KBM-7 (cell line): ENCODE measurements at regions of chr18 and their contacts with region 1.

Region 1: GRCh38 chr18:11040823-11041656 is 108.3 kb downstream of the PIEZO2 start:
- DNase-seq: peak; percentile 32

Region 2: GRCh38 chr18:10558243-10558966 is 482.6 kb before region 1 on chr18:
- in situ Hi-C with region 1: no loop called
- DNase-seq: no peak

Region 3: GRCh38 chr18:10759241-10759640 is 281.8 kb before region 1 on chr18:
- in situ Hi-C with region 1: no loop called
- DNase-seq: no peak

Region 4: GRCh38 chr18:10851824-10852319 is 189.2 kb before region 1 on chr18:
- in situ Hi-C with region 1: loop called (anchors 25 kb)
- DNase-seq: peak; percentile 65